Cardiac septum (tissue), 1 donor: ENCODE measurements at regions of chr11 and their contacts with region 1.

Region 1: DNA sequence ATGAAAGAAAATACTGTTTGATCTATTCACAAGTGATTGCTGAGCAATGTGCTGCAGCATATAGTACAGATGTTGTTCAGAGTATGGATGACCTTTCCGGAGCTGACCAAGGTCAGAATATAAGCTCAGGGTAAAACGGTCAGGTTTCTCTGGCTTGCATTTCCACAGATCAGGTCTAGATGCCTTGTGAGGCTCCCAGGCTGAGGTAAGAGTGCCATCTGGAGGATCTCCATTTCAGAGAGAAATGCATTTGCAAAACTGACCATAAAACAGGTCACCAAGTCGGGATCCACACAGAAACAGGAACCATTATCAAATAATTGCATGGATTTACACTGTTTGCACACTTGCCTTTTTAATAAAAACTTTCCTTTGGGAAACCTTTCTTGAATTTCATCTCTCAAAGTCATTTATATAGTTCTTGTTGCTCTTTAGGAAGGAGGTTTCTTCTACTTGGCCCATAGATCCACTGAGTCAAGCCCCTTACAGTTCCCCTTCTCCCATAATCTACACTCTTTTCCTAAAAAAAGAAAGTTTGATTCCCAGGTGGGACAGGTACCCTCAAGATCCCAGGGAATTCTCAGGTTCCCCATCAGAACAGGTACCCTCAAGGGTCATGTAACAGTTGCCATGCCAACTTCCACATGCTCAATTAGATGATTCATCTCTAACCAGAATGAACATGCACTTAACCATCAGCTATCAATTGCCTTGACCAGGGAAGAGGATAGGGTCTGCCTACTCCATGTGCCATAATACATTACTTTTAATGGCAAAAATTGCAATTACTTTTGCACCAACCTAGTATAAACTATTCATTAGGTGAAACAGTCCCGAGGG is 25.0 kb upstream of the TMPRSS5 start:
- DNase-seq: no peak

Region 2: DNA sequence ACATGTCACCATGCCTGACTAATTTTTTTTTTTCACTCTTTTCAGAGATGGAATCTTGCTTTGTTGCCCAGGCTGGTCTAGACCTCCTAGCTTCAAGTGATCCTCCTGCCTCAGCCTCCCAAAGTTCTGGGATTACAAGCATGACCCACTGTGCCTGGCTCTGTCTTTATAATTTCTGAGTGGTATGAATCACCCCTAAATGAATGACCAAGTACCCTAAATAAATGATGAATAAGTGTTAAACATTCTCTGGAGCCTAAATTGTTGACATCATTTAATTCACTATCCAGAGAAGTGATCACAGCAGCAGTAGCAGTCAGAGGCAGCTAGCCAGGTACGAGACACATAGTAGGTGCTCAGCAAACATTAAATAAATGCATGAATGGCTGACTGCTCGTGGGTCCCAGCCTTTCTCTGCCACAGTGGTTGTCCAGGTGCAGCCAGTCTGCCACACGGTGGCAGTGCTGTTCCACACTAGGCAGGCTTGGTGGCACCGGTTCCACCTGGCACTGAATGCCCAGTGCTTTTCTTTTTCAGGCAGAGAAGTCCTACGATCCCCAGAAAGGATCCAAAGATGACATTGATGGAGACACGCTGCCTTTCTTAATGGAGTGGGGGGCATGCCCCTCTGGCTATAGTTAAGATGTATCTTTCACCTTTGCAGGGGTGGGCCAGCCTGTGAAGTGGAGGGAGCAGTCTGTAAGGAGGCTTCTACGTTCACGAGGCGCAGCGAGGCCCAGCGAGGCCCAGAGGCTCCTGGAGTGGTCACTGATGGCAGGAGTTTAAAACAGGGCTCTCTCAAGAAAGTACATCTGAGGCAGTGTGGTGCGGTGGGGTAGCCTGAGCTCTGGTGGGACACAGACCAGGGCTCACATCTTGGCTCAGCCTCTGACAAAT is 425.4 kb before region 1 on chr11:
- intact Hi-C with region 1: loop called (anchors 1 kb)
- DNase-seq: no peak

Region 3: DNA sequence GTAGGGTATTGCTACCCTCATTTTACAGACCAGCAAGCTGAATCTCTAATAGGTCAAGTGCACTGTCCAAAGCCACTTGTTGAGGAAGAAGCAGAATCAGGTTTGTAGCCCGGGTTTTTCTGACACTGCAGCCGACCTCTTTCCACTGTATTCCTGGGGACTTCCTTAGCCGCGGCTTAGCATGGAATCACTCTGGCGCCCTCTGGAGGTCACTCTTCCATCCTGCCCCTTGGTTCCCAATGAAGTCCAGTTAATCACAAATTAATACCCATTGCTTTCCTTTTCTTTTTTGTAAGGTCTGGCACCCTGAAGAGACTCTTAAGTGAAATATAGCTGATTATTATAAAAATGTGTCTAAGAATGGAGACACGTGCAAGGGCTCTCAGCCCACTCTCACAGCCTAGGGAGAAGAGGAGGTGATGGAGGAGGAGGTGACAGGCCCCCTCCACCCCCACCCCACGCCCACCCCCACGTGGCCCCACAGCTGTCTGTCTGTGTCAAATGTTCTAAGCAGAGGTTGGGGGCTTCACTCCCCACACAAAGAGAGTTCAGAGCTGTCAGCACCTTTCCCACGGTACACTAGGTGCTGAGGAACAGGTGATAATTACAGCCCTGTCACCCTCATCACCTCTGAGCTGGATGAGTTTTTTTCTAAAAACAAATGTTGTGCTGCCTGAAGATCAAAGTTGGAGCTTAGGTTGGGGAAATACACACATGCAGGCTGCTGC is 198.2 kb before region 1 on chr11:
- intact Hi-C with region 1: loop called (anchors 10 kb)
- DNase-seq: no peak

Region 4: GRCh38 chr11:113553235-113553634 is 177.9 kb before region 1 on chr11:
- intact Hi-C with region 1: loop called (anchors 10 kb)
- DNase-seq: no peak